PC-3 (cell line): ENCODE measurements at regions of chr14 and their contacts with region 1.

Region 1: GRCh38 chr14:55599200-55599879 is 19.3 kb downstream of the KTN1 start:
- DNase-seq: peak; percentile 95
- ATAC-seq: peak; percentile 61
- H3K4me3 ChIP-seq: peak overlapping the region; percentile 66
- H3K27ac ChIP-seq: peak overlapping the region; percentile 88
- H3K4me1 ChIP-seq: peaks cover 36% of the 10 kb centered on the region
- H3K27me3 ChIP-seq: no peaks in the 10 kb centered on the region
- CTCF ChIP-seq: 0 out of 2 replicates have a peak, but pooled peaks have one; percentile 13

Region 2: GRCh38 chr14:55624913-55625312 is 25.6 kb after region 1 on chr14:
- CTCF ChIA-PET with region 1: no interaction called
- POLR2A ChIA-PET with region 1: no interaction called
- intact Hi-C with region 1: loop called (anchors 2 kb)
- DNase-seq: no peak
- ATAC-seq: no peak
- H3K4me3 ChIP-seq: no peak overlapping the region
- H3K27ac ChIP-seq: no peak overlapping the region
- H3K4me1 ChIP-seq: peaks cover 6% of the 10 kb centered on the region; the same call in 1 of the 2 replicates
- H3K27me3 ChIP-seq: no peaks in the 10 kb centered on the region
- CTCF ChIP-seq: no peak